ENCODE measurements at regions of chr10 and their contacts with region 1.

Region 1: DNA sequence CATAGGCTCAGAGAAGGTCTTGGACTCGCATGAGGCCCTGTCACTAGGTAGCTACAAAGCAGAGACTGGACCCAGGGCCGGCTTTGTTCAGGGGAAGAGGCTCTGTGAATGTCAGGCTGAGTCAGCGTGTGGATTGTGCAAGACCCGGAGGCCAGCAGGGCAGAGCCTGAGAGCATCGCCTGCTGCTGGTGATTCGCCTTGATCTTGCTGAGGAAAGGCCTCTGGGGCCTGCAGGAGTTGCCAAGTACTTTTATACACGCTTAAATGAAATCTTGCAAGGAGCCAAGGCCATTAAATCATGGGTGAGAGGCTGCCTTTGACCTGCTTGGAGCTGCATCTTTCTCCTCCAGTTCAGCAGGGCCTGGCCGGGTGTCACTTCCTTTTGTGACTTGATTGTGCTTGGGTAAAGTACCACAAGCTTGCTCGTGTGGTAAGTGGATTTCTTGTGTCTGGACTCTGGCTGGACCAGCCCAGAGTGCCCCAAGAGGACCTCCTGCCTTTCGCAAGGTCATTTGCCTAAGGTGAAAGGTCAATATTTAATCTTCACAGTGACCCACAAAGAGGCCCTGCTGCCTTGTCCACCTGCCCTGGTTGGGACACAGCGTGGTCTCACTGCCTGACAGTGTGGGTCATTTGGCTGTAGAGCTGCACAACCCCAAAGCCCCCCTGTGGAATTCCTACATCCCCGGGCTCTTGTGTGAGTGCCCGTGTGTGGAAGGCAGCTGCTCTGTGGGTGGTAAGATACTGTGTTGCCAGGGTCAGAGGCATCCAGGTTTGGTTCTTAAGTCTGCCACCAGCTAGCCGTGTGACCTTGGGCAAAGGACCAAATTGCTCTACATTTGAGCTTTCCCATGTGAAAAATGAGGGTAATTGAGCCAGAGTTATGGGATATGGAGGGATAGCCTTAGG is 38.6 kb upstream of the SH2D4B start:
- DNase-seq: peak; percentile 78
- H3K4me3 ChIP-seq: no peak overlapping the region
- H3K27ac ChIP-seq: peak overlapping the region; percentile 76
- H3K4me1 ChIP-seq: peaks cover 96% of the 10 kb centered on the region
- H3K27me3 ChIP-seq: no peaks in the 10 kb centered on the region
- CTCF ChIP-seq: no peak
- POLR2A ChIP-seq: peak; percentile 36

Region 2: GRCh38 chr10:80205478-80206276 is 293.4 kb before region 1 on chr10 and contains the start of gene ANXA11:
- CTCF ChIA-PET with region 1: no interaction called
- POLR2A ChIA-PET with region 1: no interaction called
- dilution Hi-C with region 1: no loop called
- intact Hi-C with region 1: no loop called
- DNase-seq: peak; percentile 62
- H3K4me3 ChIP-seq: peak within 1 kb of the TSS; percentile 16 to 71 (median 50)
- H3K27ac ChIP-seq: peak within 1 kb of the TSS; percentile 87
- H3K4me1 ChIP-seq: peaks cover 38% of the 10 kb centered on the region
- H3K27me3 ChIP-seq: no peaks in the 10 kb centered on the region
- CTCF ChIP-seq: no peak
- POLR2A ChIP-seq: peak; percentile 62
- total RNA-seq, gene ANXA11: 122 and 143 TPM in 2 replicates

Region 3: GRCh38 chr10:80485950-80486764 is 12.9 kb before region 1 on chr10:
- CTCF ChIA-PET with region 1: interaction called, 10 read pairs
- POLR2A ChIA-PET with region 1: interaction called, 7 read pairs
- dilution Hi-C with region 1: no loop called
- intact Hi-C with region 1: loop called (anchors 1 kb)
- DNase-seq: no peak
- H3K4me3 ChIP-seq: no peak overlapping the region
- H3K27ac ChIP-seq: no peak overlapping the region
- H3K4me1 ChIP-seq: peaks cover 36% of the 10 kb centered on the region
- H3K27me3 ChIP-seq: no peaks in the 10 kb centered on the region
- CTCF ChIP-seq: no peak
- POLR2A ChIP-seq: no peak

Measured in endothelial cell of umbilical vein (primary cell).